GM10248 (cell line): ENCODE measurements at regions of chr20 and their contacts with region 1.

Region 1: DNA sequence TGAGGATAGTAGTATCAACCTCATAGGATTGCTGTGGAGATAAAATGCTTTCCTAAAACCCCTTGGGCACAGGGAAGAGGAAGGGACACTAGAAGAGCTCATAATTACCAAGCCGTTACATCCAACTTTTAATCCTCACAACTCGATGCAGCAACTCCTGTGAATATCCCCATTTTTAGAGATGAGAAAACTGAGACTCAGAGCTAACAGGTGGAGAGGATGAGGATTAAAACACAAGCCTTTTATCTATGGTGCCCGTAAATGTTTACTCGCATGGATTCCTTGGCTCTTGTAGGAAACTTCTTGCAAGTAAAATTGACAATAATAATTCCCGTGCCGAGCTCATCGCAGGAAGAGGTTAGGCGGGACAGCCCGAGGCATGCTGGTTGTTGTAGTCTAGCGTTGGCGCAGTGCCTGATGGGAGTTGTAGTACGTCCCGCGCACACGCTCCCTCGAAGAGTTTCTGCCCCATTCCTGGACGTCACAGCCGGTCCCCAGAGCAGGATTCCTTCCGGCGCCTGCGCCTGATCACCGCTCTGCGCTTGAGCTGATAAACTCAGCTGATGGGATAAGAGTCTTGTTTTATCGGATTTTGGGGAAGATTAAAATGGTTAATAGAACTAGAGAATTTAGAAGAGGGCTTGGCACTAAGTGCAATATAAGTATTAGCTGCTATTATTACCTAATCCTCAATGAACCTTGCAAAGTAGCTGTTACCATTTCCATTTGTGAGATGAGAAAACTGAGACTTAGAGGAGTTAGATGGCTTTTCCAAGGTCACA is 2.8 kb upstream of the UBE2V1 start:
- DNase-seq: peak; percentile 91
- CTCF ChIP-seq: no peak

Region 2: DNA sequence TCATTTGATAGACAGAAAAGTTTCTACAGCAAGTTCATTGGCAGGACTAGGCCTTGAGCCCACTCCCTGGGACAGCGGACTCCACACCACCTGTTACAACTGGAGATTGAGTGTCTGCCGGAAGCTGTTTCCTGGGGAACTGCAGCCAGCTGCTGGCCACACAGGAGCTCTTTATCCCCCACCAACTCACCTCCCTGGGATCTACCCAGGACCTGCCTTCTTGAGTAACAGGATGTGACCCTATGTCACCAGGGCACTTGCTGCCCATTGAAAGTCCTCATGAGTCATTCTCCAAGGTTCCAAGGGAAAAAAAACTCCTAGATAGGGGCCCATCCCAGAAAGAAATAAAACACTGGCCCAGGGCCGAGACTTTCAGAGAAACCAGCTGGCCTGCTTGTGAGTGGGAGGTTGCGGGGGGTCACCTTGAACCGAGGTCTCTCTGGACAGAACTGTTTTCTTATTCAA is 340.5 kb before region 1 on chr20:
- CTCF ChIA-PET with region 1: no interaction called
- POLR2A ChIA-PET with region 1: no interaction called
- DNase-seq: no peak
- CTCF ChIP-seq: no peak

Region 3: GRCh38 chr20:50085452-50086365 is 30.1 kb before region 1 on chr20:
- CTCF ChIA-PET with region 1: interaction called, 16 read pairs
- POLR2A ChIA-PET with region 1: no interaction called
- DNase-seq: peak; percentile 72
- CTCF ChIP-seq: peak; percentile 77

Region 4: GRCh38 chr20:50101281-50101680 is 14.5 kb before region 1 on chr20:
- CTCF ChIA-PET with region 1: interaction called, 18 read pairs
- POLR2A ChIA-PET with region 1: no interaction called
- DNase-seq: no peak
- CTCF ChIP-seq: no peak

Region 5: DNA sequence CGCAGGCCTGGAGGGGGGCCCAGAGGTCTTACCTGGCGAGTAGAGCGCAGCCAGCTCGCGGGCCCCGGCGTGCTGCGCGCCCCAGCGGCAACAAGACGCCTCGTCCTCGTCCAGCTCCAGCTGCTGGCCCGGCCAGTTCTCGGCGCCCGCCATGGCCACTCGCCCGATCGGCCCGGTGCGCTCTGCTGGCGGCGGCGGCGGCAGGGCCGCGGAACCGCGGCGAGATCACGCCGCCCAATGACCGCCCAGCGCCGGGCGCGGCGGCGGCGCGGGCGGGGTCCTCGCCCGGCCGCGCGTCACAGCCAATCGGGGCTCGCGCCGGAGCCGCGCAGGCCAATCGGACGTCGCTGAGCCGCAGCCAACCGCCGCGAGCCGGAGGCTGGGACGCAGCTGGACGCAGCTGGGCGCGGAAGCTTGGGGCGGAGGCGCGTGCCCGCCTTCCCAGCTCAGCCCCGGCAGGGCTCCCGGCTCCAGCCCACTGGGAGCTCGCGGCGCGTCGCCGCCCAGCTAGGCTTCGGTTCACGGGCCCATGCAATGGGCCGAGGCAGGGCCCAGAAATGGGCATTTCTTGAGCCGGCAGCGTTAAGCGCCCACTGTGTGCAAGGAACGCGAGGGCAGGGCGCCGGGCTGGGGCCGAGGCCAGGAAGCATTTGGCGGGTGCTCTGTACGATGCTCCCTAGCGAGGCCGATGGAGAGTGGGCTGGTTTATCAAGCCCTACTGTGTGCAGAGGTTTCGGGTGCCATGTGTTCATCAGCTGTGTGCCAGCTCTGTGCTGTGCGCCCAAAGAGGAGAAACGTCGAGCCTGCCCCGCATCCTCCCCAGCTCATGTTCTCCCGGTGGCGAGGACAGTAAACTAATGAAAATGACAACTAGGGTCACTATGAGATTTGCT is 37.9 kb after region 1 on chr20 and contains the start of gene PEDS1:
- CTCF ChIA-PET with region 1: interaction called, 17 read pairs
- POLR2A ChIA-PET with region 1: interaction called, 4 read pairs
- DNase-seq: peak; percentile 99
- CTCF ChIP-seq: no peak

Region 6: GRCh38 chr20:50286609-50287008 is 170.8 kb after region 1 on chr20:
- CTCF ChIA-PET with region 1: no interaction called
- POLR2A ChIA-PET with region 1: no interaction called
- DNase-seq: peak; percentile 78
- CTCF ChIP-seq: no peak